Natural killer cell (primary cell): ENCODE measurements at regions of chr1 and their contacts with region 1.

Region 1: GRCh38 chr1:15314328-15315281 is 67.6 kb downstream of the FHAD1 start:
- DNase-seq: no peak
- ATAC-seq: peak; percentile 21 to 49 (median 28)
- H3K4me3 ChIP-seq: no peak overlapping the region
- H3K4me3 Mint-ChIP-seq: no peak overlapping the region
- H3K27ac ChIP-seq: no peak overlapping the region
- H3K27ac Mint-ChIP-seq: peak overlapping the region; percentile 60 to 66
- H3K4me1 ChIP-seq: no peaks in the 10 kb centered on the region
- H3K4me1 Mint-ChIP-seq: peaks cover 0 to 11% of the 10 kb centered on the region in 2 donors
- H3K27me3 ChIP-seq: no peaks in the 10 kb centered on the region
- H3K27me3 Mint-ChIP-seq: no peaks in the 10 kb centered on the region
- CTCF ChIP-seq: no peak

Region 2: DNA sequence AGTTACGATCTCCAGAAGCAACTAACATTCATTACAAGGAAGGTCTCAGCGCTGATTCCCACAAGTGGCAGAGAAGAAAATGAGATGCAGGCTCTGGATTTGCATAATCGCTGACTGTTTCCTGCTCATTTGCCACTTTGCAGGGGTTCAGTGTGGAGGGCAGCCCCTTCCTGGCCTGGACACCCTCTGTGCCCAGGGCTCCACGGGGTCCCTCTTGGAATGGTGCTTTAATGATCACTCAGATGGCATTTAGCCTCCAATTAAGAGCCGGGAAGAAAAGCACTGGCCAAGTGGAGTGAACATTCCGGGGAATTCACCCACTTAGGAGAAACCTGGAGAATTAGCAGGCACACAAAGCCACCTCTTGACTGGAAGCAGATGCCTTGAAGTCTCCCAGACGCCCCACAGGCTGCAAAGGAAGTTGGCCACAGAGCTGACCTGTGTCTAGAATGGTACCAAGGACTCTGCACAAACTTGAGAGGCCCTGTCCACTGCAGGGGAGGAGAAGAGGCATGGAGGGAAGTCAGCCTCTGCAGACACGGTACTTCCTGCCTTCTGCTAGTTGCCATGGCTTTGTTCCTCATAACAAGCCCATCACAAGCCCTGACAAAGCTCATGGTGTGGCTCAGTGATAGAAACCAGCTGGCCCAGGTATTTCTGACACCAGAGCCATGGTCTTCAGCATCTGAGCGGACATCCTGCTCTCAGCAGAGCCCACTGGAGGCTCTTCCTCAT is 558.9 kb before region 1 on chr1:
- intact Hi-C with region 1: no loop called
- DNase-seq: no peak
- ATAC-seq: no peak
- H3K4me3 ChIP-seq: no peak overlapping the region
- H3K4me3 Mint-ChIP-seq: no peak overlapping the region
- H3K27ac ChIP-seq: no peak overlapping the region
- H3K27ac Mint-ChIP-seq: no peak overlapping the region
- H3K4me1 ChIP-seq: no peaks in the 10 kb centered on the region
- H3K4me1 Mint-ChIP-seq: no peaks in the 10 kb centered on the region
- H3K27me3 ChIP-seq: no peaks in the 10 kb centered on the region
- H3K27me3 Mint-ChIP-seq: peaks cover 6 to 15% of the 10 kb centered on the region in 2 donors
- CTCF ChIP-seq: no peak

Region 3: DNA sequence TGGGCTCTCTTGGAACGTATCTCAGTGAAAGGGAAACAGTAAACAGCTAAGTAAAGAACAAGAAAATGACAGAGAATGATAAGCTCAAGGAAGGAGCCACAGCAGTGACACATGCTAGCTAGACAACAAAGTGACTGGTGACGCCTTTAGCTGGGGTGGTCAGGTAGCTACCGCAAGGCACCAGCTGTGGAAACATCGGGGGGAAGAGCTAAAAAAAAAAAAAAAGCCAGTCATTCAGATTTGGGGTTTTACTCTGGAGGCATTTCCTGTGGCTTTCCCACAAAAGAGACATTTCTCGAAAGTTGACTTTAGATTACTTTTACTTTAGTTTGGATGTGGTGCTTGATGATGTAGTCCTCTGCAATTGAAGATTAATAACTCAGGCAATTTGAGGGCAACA is 65.5 kb before region 1 on chr1:
- intact Hi-C with region 1: no loop called
- DNase-seq: peak; percentile 56 to 76
- ATAC-seq: peak; percentile 62 to 76 (median 71)
- H3K4me3 ChIP-seq: no peak overlapping the region
- H3K4me3 Mint-ChIP-seq: peak overlapping the region; percentile 65
- H3K27ac ChIP-seq: peak overlapping the region; percentile 22
- H3K27ac Mint-ChIP-seq: peak overlapping the region; percentile 61 to 70
- H3K4me1 ChIP-seq: peaks cover 44% of the 10 kb centered on the region
- H3K4me1 Mint-ChIP-seq: peaks cover 72 to 73% of the 10 kb centered on the region in 2 donors
- H3K27me3 ChIP-seq: peaks cover 6% of the 10 kb centered on the region
- H3K27me3 Mint-ChIP-seq: peaks cover 7 to 22% of the 10 kb centered on the region in 2 donors
- CTCF ChIP-seq: no peak

Region 4: DNA sequence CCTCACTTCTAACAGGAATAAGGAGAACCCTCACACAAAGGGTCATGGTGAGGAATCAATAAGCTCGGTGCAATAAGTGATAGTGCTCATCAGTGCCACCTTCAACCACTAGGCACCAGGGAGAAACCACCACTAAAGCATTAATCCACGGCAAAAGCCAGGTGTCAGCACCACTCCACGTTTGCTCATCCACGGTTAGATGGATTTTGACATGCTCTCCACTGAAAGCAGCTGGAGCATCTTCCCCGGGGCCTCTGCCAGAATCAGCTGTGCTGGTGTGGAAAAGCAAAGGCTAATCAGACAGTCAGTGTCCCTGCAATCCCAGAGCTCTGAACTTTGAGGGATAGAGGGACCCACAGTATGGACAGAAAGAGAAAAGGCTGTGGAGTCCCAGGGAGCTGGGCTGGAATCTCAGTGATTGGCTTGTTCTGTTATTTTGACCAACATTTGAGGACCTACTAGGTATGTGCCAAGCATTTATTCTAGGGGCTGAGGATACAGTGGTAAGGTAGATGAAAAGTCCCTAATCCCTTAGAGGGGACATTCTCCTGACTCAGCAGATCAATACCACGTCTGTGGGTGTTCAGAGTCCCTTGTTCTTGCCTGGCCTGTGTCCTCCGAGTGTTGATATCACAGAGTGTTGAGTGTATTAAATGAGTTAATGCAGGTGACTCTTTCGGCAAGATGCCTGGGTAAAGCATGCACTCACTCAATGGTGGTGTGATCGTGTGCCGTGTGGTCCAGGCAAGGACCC is 26.3 kb before region 1 on chr1:
- intact Hi-C with region 1: no loop called
- DNase-seq: no peak
- ATAC-seq: no peak
- H3K4me3 ChIP-seq: no peak overlapping the region
- H3K4me3 Mint-ChIP-seq: no peak overlapping the region
- H3K27ac ChIP-seq: no peak overlapping the region
- H3K27ac Mint-ChIP-seq: no peak overlapping the region
- H3K4me1 ChIP-seq: no peaks in the 10 kb centered on the region
- H3K4me1 Mint-ChIP-seq: no peaks in the 10 kb centered on the region
- H3K27me3 ChIP-seq: no peaks in the 10 kb centered on the region
- H3K27me3 Mint-ChIP-seq: peaks cover 2 to 14% of the 10 kb centered on the region in 2 donors
- CTCF ChIP-seq: no peak

Region 5: GRCh38 chr1:15352123-15352957 is 37.7 kb after region 1 on chr1:
- intact Hi-C with region 1: loop called (anchors 5 kb)
- DNase-seq: peak; percentile 51 to 68
- ATAC-seq: peak; percentile 80 to 97 (median 92)
- H3K4me3 ChIP-seq: no peak overlapping the region
- H3K4me3 Mint-ChIP-seq: peak overlapping the region; percentile 79
- H3K27ac ChIP-seq: peak overlapping the region; percentile 36
- H3K27ac Mint-ChIP-seq: peak overlapping the region; percentile 86 to 92
- H3K4me1 ChIP-seq: peaks cover 52% of the 10 kb centered on the region
- H3K4me1 Mint-ChIP-seq: peaks cover 31 to 51% of the 10 kb centered on the region in 2 donors
- H3K27me3 ChIP-seq: no peaks in the 10 kb centered on the region
- H3K27me3 Mint-ChIP-seq: no peaks in the 10 kb centered on the region
- CTCF ChIP-seq: no peak